Activated CD4-positive, alpha-beta memory T cell treated with anti-CD3 and anti-CD28 coated beads for 36 hours (primary cell): ENCODE measurements at regions of chr16 and their contacts with region 1.

Region 1: DNA sequence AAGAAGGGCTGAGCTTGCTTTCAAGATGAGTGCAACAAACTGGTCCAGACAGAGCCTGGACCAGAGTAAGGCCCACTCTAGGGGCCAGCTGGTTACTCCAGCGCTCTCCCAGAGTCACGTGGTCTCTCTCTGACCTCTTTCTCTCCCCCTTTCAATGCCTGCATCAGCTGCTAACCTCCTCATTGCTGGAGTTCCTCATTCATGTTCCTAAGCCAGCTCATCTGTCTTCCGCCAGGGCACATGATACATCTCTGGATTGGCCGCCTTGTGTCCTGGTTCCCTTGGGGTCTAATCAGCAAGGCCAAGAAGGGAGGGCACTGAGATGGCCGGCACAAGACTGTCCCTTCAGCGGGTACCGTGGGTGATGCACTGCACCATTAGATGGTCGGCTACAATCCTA is 26.9 kb upstream of the ZFP90 start:
- DNase-seq: no peak
- H3K4me3 Mint-ChIP-seq: no peak overlapping the region
- H3K27ac Mint-ChIP-seq: no peak overlapping the region
- H3K4me1 Mint-ChIP-seq: no peaks in the 10 kb centered on the region
- H3K27me3 Mint-ChIP-seq: peaks cover 3% of the 10 kb centered on the region

Region 2: GRCh38 chr16:68367030-68367429 is 145.2 kb before region 1 on chr16:
- CTCF ChIA-PET with region 1: interaction called, 6 read pairs
- POLR2A ChIA-PET with region 1: no interaction called
- intact Hi-C with region 1: loop called (anchors 1 kb)
- DNase-seq: peak; percentile 57
- H3K4me3 Mint-ChIP-seq: no peak overlapping the region
- H3K27ac Mint-ChIP-seq: no peak overlapping the region
- H3K4me1 Mint-ChIP-seq: peaks cover 32% of the 10 kb centered on the region
- H3K27me3 Mint-ChIP-seq: peaks cover 10% of the 10 kb centered on the region

Region 3: DNA sequence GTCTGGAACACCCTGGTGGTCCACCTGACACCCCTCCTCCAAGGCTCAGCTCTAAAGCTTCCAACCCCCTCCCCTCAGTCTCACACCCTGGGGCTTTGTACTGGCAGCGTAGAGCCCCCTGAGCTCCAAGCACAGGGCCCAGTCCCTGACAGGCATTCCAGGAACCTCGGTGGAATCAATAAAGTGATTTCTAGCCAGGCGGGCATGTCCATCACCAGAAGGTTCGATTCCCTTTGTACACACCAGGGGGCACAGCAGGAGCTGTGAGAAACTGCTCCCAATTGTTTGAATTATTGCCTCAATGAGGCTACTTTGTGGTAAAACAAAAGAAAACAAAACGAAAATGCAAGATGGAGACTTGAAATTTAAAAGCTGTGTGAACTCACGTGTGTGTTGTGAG is 115.7 kb before region 1 on chr16:
- CTCF ChIA-PET with region 1: interaction called, 101 read pairs
- POLR2A ChIA-PET with region 1: no interaction called
- intact Hi-C with region 1: loop called (anchors 1 kb)
- DNase-seq: peak; percentile 63
- H3K4me3 Mint-ChIP-seq: no peak overlapping the region
- H3K27ac Mint-ChIP-seq: no peak overlapping the region
- H3K4me1 Mint-ChIP-seq: peaks cover 16% of the 10 kb centered on the region
- H3K27me3 Mint-ChIP-seq: no peaks in the 10 kb centered on the region

Region 4: DNA sequence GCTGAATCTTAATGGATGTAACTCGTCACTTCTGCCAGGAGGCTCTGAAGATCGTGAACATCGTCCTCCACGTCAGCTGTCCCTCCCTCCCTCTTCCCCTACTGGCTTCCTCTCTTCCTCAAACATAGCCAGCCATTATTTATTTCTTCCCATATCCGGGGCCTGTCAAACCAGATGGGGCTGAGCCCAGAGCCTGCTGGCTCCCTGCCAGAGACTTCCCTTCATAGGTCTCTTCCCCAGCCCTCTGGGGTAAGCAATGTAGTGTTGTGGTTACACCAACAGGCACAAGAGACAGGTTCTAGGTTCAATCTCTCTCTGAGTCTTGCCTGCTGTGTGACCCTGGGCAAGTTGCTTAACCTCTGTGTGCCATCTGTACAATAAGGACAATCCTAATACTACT is 13.2 kb before region 1 on chr16:
- CTCF ChIA-PET with region 1: interaction called, 11 read pairs
- POLR2A ChIA-PET with region 1: no interaction called
- intact Hi-C with region 1: no loop called
- DNase-seq: no peak
- H3K4me3 Mint-ChIP-seq: no peak overlapping the region
- H3K27ac Mint-ChIP-seq: no peak overlapping the region
- H3K4me1 Mint-ChIP-seq: no peaks in the 10 kb centered on the region
- H3K27me3 Mint-ChIP-seq: no peaks in the 10 kb centered on the region

Region 5: GRCh38 chr16:68553186-68553585 is 41.0 kb after region 1 on chr16:
- CTCF ChIA-PET with region 1: no interaction called
- POLR2A ChIA-PET with region 1: no interaction called
- intact Hi-C with region 1: no loop called
- DNase-seq: no peak
- H3K4me3 Mint-ChIP-seq: no peak overlapping the region
- H3K27ac Mint-ChIP-seq: no peak overlapping the region
- H3K4me1 Mint-ChIP-seq: peaks cover 8% of the 10 kb centered on the region
- H3K27me3 Mint-ChIP-seq: no peaks in the 10 kb centered on the region

Region 6: DNA sequence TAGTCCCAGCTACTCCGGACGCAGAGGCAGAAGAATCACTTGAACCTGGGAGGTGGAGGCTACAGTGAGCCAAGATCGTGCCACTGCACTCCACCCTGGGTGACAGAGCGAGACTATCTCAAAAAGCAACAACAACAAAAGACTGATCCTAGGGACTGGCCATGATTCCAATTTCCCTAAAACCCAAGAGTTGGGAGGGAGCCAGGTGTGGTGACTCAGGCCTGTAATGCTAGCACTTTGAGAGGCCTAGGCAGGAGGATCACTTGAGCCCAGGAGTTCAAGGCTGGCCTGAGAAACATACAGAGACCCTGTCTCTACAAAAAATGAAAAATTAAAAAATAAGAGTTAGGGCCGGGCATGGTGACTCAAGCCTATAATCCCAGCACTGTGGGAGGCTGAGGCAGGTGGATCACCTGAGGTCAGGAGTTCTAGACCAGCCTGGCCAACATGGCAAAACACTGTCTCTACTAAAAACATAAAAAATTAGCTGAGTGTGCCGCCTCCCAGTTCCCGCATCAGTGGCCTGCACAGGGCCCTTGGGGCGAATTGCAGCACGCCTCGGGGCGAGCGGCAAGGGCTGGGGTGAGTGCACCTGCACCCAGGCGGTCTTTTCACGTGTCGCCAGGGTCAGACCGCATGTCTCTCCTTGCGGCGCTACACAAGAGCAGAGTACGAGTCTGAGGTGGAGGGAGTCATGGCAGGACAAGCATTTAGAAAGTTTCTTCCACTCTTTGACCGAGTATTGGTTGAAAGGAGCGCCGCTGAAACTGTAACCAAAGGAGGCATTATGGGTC is 173.7 kb after region 1 on chr16:
- CTCF ChIA-PET with region 1: no interaction called
- POLR2A ChIA-PET with region 1: no interaction called
- intact Hi-C with region 1: no loop called
- DNase-seq: no peak
- H3K4me3 Mint-ChIP-seq: no peak overlapping the region
- H3K27ac Mint-ChIP-seq: no peak overlapping the region
- H3K4me1 Mint-ChIP-seq: no peaks in the 10 kb centered on the region
- H3K27me3 Mint-ChIP-seq: no peaks in the 10 kb centered on the region